ENCODE measurements at regions of chr16 and their contacts with region 1.

Region 1: GRCh38 chr16:77885571-77886295 is 97.4 kb downstream of the VAT1L start:
- DNase-seq: no peak
- H3K4me3 ChIP-seq: no peak overlapping the region
- H3K27ac ChIP-seq: no peak overlapping the region
- H3K4me1 ChIP-seq: no peaks in the 10 kb centered on the region
- H3K27me3 ChIP-seq: no peaks in the 10 kb centered on the region
- CTCF ChIP-seq: no peak
- POLR2A ChIP-seq: no peak

Region 2: GRCh38 chr16:78155791-78156345 is 270.1 kb after region 1 on chr16:
- intact Hi-C with region 1: loop called (anchors 5 kb)
- DNase-seq: no peak
- H3K4me3 ChIP-seq: no peak overlapping the region
- H3K27ac ChIP-seq: no peak overlapping the region
- H3K4me1 ChIP-seq: no peaks in the 10 kb centered on the region
- H3K27me3 ChIP-seq: no peaks in the 10 kb centered on the region
- CTCF ChIP-seq: no peak
- POLR2A ChIP-seq: no peak

Measured in breast epithelium (tissue), 4 donors.